Activated CD4-positive, alpha-beta memory T cell treated with anti-CD3 and anti-CD28 coated beads for 36 hours (primary cell): ENCODE measurements at regions of chr20 and their contacts with region 1.

Region 1: GRCh38 chr20:38073307-38074071 is 39.9 kb downstream of the RPRD1B start:
- DNase-seq: peak; percentile 22
- H3K4me3 Mint-ChIP-seq: no peak overlapping the region
- H3K27ac Mint-ChIP-seq: peak overlapping the region; percentile 2
- H3K4me1 Mint-ChIP-seq: peaks cover 16% of the 10 kb centered on the region
- H3K27me3 Mint-ChIP-seq: no peaks in the 10 kb centered on the region

Region 2: GRCh38 chr20:38001173-38001872 is 72.2 kb before region 1 on chr20:
- CTCF ChIA-PET with region 1: no interaction called
- POLR2A ChIA-PET with region 1: no interaction called
- intact Hi-C with region 1: no loop called
- DNase-seq: peak; percentile 52
- H3K4me3 Mint-ChIP-seq: no peak overlapping the region
- H3K27ac Mint-ChIP-seq: peak overlapping the region; percentile 65
- H3K4me1 Mint-ChIP-seq: peaks cover 40% of the 10 kb centered on the region
- H3K27me3 Mint-ChIP-seq: no peaks in the 10 kb centered on the region

Region 3: DNA sequence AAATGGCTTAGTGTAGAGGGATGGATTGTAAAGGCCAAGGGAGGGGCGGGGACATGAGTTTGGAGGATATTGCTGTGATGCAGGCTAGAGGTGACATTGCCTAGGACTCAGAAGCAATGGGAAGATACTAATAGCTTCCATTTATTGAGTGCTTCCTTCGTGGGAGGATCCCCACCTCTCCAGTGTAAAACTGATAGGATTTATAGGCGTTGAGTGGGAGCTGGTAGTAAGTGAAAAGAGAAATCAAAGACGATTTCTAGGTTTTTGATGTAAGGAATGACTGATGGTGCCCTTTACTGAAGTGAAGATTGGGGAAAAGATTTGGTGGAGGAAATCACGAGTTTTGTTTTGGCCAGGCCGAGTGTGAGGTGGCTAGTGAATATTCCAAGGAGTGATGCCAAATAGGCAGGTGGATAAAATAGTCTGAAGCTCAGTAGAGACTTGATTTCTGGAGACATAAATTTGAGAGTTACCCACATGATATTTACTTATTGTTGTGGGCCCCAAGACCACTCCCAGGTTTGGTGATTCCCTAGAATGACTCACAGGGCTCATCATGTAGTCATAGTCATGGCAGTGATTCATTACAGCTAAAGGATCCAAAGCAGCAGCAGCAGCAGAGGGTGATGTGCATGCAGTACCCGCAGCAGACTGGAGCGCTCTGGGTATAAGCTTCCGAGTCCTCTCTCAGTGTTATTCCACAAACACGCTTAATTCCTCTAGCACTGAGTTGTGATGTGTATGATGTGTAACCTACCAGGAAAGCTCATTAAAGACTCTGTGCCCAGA is 29.8 kb before region 1 on chr20:
- CTCF ChIA-PET with region 1: interaction called, 12 read pairs
- POLR2A ChIA-PET with region 1: no interaction called
- intact Hi-C with region 1: no loop called
- DNase-seq: peak; percentile 46
- H3K4me3 Mint-ChIP-seq: no peak overlapping the region
- H3K27ac Mint-ChIP-seq: no peak overlapping the region
- H3K4me1 Mint-ChIP-seq: peaks cover 46% of the 10 kb centered on the region
- H3K27me3 Mint-ChIP-seq: no peaks in the 10 kb centered on the region

Region 4: GRCh38 chr20:38084400-38084951 is 11.0 kb after region 1 on chr20:
- CTCF ChIA-PET with region 1: interaction called, 16 read pairs
- POLR2A ChIA-PET with region 1: no interaction called
- intact Hi-C with region 1: no loop called
- DNase-seq: no peak
- H3K4me3 Mint-ChIP-seq: no peak overlapping the region
- H3K27ac Mint-ChIP-seq: no peak overlapping the region
- H3K4me1 Mint-ChIP-seq: no peaks in the 10 kb centered on the region
- H3K27me3 Mint-ChIP-seq: no peaks in the 10 kb centered on the region

Region 5: DNA sequence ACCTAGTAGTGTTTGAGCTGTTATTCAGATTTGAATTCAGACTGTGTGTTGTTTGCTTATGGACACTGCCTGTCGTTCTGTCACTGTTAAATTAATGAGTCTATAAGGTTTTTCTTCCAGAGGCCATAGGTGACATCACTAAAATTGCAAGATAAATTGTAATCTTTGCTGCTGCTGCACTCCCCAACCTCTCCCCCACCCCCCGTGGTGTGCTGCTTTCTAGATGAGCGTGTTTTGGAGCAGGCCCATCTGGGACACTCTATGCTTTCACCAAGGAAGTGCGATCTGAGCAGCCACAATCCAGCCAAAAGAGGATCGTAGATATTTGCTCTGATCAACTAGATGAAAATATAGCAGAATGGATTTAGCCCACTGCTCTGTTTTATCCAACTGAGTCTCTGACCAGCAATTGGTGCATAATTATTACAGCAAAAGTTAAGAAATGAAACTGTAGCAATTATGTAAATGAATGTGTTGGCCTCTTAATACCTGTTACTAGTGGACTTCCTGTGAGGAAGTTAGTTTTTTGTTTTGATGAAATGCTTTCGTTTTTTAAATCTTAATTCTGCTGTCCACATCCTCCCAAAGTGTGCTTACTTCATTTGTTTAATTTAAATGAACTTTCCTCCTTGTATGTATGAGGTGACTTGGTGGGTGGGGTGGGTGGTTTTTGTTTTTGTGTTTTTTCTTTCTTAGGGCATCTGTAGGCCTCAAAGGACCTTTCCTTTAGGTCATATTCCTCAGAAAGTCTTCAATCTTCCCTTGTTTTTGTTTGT is 18.1 kb after region 1 on chr20:
- CTCF ChIA-PET with region 1: interaction called, 16 read pairs
- POLR2A ChIA-PET with region 1: no interaction called
- intact Hi-C with region 1: no loop called
- DNase-seq: no peak
- H3K4me3 Mint-ChIP-seq: no peak overlapping the region
- H3K27ac Mint-ChIP-seq: peak overlapping the region; percentile 53
- H3K4me1 Mint-ChIP-seq: peaks cover 30% of the 10 kb centered on the region
- H3K27me3 Mint-ChIP-seq: no peaks in the 10 kb centered on the region

Region 6: DNA sequence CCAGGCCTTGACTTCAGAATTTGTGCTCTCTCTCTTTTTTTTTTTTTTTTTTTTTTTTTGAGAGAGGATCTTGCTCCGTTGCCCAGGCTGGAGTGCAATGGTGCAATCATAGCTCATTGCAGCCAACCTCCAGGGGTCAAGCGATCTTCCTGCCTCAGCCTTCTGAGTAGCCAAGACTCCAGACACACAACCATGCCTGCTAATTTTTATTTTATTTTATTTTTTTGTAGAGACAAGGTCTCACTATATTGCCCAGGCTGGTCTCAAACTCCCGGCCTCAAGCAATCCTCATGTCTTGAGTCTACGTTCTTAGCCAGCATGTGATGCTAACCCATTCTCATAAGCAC is 72.2 kb after region 1 on chr20:
- CTCF ChIA-PET with region 1: no interaction called
- POLR2A ChIA-PET with region 1: no interaction called
- intact Hi-C with region 1: no loop called
- DNase-seq: no peak
- H3K4me3 Mint-ChIP-seq: no peak overlapping the region
- H3K27ac Mint-ChIP-seq: no peak overlapping the region
- H3K4me1 Mint-ChIP-seq: no peaks in the 10 kb centered on the region
- H3K27me3 Mint-ChIP-seq: peaks cover 7% of the 10 kb centered on the region

Region 7: DNA sequence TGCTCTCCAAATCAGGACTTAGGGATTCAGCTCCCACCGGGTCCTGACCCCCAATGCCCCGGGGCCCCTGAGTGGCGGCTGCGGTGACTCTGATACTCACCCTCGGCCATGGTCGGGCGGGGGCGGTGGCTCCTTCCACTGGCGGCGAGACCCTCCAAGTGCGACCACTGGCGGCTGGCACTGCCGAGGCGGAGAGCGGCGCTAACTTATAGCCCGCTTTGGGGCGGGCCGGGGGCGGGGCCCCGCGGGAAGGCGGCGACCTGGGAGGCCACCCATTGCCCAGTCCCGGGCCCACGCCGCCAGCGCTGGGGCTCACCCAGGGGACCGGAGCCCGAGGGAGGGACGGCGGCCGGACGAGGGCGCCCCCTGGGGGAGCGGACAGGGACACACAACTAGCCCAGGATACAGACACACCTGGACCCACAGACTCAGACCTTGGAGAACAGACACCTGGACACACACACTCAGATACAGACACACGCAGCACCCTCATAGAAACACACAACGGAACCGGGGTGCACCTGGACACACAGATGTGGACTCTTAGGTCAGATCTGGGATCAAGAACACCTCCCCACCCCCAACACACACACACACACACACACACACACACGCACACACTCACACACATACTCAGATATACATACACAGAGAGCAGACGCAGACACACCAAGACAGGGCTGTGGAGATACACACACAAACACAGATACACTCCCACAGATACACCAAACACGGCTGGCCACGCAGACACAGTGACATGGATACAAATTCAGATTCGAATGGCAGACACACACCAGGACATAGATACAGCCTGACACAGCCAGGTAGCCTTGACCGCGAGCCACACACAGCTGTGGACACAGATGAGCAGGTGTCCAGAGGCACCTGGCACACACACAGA is 91.8 kb after region 1 on chr20 and contains the start of gene TGM2:
- CTCF ChIA-PET with region 1: interaction called, 21 read pairs
- POLR2A ChIA-PET with region 1: no interaction called
- intact Hi-C with region 1: loop called (anchors 5 kb)
- DNase-seq: peak; percentile 67
- H3K4me3 Mint-ChIP-seq: no peak within 1 kb of the TSS
- H3K27ac Mint-ChIP-seq: no peak within 1 kb of the TSS
- H3K4me1 Mint-ChIP-seq: peaks cover 5% of the 10 kb centered on the region
- H3K27me3 Mint-ChIP-seq: peaks cover 24% of the 10 kb centered on the region
- total RNA-seq, gene TGM2: not detected